Endothelial cell of umbilical vein (primary cell): ENCODE measurements at regions of chr6 and their contacts with region 1.

Region 1: DNA sequence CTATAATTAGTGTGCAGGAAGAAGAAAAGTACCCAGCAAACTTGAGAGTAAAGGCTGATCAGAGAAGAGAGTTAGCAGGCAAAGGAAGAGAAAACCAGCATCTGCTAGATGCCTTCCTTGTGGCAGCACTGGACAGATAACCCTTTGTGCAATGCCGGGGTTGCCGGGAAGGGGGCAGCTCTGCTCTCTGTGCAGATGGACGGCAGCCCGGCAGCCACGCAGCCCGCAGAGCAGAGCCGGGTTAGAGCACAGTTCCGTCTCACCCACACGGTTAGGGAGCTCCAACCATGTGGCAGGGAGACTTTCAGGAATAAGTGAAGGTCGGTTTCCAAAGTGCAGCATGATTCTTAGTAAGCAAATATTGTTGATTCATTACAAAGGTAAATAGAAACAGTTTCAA is 80.0 kb upstream of the RPS6KA2 start:
- DNase-seq: peak; percentile 54
- H3K4me3 ChIP-seq: no peak overlapping the region
- H3K27ac ChIP-seq: no peak overlapping the region
- H3K4me1 ChIP-seq: no peaks in the 10 kb centered on the region
- H3K27me3 ChIP-seq: peaks cover 8% of the 10 kb centered on the region in 2 experiments
- CTCF ChIP-seq: peak; percentile 27 to 76
- POLR2A ChIP-seq: no peak

Region 2: GRCh38 chr6:166515072-166515810 is 191.8 kb before region 1 on chr6:
- CTCF ChIA-PET with region 1: interaction called, 3 read pairs
- POLR2A ChIA-PET with region 1: no interaction called
- dilution Hi-C with region 1: no loop called
- intact Hi-C with region 1: loop called (anchors 5 kb)
- DNase-seq: peak; percentile 56
- H3K4me3 ChIP-seq: no peak overlapping the region
- H3K27ac ChIP-seq: no peak overlapping the region
- H3K4me1 ChIP-seq: peaks cover 6% of the 10 kb centered on the region
- H3K27me3 ChIP-seq: no peaks in the 10 kb centered on the region
- CTCF ChIP-seq: peak; percentile 23 to 32
- POLR2A ChIP-seq: no peak

Region 3: DNA sequence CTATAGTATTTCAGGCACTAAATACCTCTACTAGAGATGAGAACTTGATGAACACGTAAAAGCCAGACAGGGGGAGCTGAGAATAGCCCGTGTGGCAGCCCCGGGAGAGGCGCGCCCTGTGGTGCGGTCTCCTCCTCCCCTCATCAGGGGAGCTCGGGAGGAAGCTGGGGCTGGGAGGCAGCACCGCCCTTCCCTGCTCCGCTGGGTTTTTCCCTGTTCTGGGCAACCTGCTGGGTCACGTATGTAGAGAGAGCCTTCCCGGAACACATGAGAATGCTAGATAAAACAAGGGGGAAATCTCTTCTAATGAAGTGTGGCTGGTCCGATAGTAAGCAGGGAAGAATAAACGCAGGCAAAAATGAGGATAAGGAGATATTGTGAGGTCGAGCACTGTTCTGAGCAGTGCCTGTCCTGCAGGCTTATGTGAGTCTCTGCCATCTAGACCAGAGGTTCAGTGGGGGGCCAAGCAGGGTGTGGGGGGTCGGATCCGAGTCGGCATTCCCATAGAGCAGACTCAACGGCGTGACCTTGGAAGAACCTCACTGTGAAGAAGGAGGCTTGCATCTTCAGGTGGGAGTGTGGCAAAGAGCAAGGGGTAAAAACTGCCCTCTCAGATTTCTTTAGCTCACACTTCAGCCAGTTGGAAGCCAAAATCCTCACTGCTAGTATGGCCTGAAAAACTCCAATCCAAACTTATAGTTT is 66.6 kb before region 1 on chr6:
- CTCF ChIA-PET with region 1: interaction called, 10 read pairs
- POLR2A ChIA-PET with region 1: no interaction called
- dilution Hi-C with region 1: no loop called
- intact Hi-C with region 1: loop called (anchors 1 kb)
- DNase-seq: peak; percentile 76
- H3K4me3 ChIP-seq: peak overlapping the region in 1 of 3 experiments; percentile 21
- H3K27ac ChIP-seq: peak overlapping the region; percentile 59
- H3K4me1 ChIP-seq: peaks cover 34% of the 10 kb centered on the region
- H3K27me3 ChIP-seq: no peaks in the 10 kb centered on the region
- CTCF ChIP-seq: peak in 1 of 2 donors; percentile 13
- POLR2A ChIP-seq: no peak